ENCODE measurements at regions of chr11 and their contacts with region 1.

Region 1: DNA sequence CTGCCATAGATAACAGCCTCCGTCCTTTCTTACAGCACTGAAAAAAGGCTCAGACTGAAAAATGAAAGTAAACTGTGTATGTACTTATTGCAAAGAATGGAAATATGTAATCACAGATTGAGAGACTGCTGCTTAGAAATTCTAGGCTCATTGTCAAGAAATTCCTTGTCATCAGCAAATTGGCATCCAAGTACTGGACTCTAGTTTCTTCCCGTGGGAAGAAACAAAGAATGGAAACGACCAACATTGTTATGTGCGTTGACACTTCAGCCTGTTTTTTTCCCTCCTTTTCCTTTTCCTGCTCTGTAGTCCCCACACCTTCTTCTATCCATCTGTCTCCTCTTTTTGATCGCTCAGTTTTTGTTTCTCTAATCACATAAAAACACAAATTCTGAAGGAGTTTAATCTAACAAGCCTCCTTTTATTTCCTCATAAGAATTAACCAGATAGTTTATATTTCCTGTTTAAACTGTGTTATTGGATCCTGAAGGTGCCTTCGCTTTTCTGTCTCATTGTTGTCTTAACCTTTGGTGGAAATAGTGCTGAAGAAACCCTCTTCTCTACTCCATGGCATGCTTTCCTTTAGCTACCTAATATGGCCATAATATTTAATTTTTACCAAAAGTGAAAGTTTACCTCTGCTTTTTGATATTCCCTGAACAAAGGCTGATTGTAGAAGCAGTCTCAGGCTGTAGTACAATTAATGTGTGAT is 20.0 kb upstream of the CASP12 start:
- DNase-seq: no peak
- H3K4me3 Mint-ChIP-seq: peak overlapping the region; percentile 71
- H3K27ac Mint-ChIP-seq: peak overlapping the region; percentile 30
- H3K4me1 Mint-ChIP-seq: peaks cover 31% of the 10 kb centered on the region
- H3K27me3 Mint-ChIP-seq: peaks cover 3% of the 10 kb centered on the region

Region 2: GRCh38 chr11:104700609-104701008 is 217.7 kb before region 1 on chr11:
- intact Hi-C with region 1: loop called (anchors 2 kb)
- DNase-seq: no peak
- H3K4me3 Mint-ChIP-seq: peak overlapping the region; percentile 3
- H3K27ac Mint-ChIP-seq: no peak overlapping the region
- H3K4me1 Mint-ChIP-seq: peaks cover 27% of the 10 kb centered on the region
- H3K27me3 Mint-ChIP-seq: no peaks in the 10 kb centered on the region

Region 3: DNA sequence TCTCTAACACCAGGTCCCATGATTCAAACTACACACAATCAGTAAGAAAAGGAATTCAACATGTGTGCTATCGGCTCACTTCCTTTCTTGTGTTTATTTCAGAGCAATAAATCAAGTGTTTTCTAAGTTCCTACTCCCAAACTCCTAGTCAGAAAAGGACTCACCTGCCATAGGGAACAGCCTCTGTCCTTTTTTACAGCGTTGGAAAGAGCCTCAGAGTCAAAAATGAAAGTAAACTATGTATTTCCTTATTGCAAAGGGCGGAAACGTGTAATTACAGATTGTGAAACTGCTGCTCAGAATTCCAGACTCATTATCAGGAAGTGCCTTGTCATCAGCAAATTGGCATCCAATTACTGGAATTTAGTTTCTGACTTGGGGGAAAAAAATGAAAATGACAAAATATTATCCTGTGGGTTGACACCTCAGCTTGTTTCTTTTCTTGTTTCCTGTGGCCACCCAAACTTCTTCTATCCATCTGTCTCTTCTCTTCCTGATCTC is 50.1 kb after region 1 on chr11 and contains the start of gene CASP4:
- intact Hi-C with region 1: loop called (anchors 2 kb)
- DNase-seq: no peak
- H3K4me3 Mint-ChIP-seq: peak within 1 kb of the TSS; percentile 87
- H3K27ac Mint-ChIP-seq: peak within 1 kb of the TSS; percentile 85
- H3K4me1 Mint-ChIP-seq: peaks cover 50% of the 10 kb centered on the region
- H3K27me3 Mint-ChIP-seq: peaks cover 2% of the 10 kb centered on the region
- total RNA-seq, gene CASP4: 32.9 and 34.0 TPM in 2 replicates

Region 4: GRCh38 chr11:105265859-105266258 is 347.6 kb after region 1 on chr11:
- intact Hi-C with region 1: no loop called
- DNase-seq: no peak
- H3K4me3 Mint-ChIP-seq: no peak overlapping the region
- H3K27ac Mint-ChIP-seq: no peak overlapping the region
- H3K4me1 Mint-ChIP-seq: no peaks in the 10 kb centered on the region
- H3K27me3 Mint-ChIP-seq: peaks cover 4% of the 10 kb centered on the region

Measured in activated T-helper 1 cell treated with anti-CD3 and anti-CD28 coated beads, Interleukin-12 subunit alpha, Interleukin-12 subunit beta, Interleukin-2, Interleukin-4 antibody, amounts not matched to agents 30 ng/mL and 10 ng/mL and 1 ng/mL, durations not matched to agents 14 hours and 24 hours and 36 hours (primary cell).